Lower leg skin (tissue), 4 donors: ENCODE measurements at regions of chr6 and their contacts with region 1.

Region 1: GRCh38 chr6:2911171-2911570 is 8.1 kb upstream of the SERPINB9 start:
- DNase-seq: no peak
- H3K4me3 ChIP-seq: no peak overlapping the region
- CTCF ChIP-seq: no peak
- POLR2A ChIP-seq: no peak

Region 2: DNA sequence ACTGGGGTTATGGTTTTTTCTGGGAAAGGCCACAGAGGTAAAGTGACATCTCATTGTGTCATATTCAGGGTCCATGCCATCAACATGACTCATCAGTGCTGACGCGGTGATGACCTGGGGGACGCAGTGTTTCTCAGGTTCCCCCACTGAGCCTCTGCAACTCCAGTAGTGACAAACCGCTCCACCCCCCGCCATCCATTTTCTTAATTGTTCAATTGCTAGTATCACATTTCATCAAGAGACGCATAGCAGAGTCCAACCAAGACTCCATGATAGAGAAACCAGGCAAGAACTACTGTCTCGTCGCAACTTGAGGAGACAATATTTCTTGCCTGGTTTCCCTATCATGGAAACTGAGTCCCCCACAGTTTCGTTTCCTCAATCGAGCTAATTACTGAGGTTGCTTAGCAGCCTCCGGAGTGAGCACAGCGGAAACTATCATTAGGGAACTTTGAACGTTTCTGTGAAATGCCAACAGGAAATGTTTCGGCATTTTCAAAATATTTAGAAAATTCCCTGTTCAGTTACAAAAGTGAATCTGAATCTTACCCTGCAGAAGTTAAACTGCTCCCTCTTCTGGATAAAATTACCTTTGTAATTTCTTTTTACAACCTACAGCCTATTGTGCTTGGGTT is 57.3 kb before region 1 on chr6:
- intact Hi-C with region 1: loop called (anchors 10 kb)
- DNase-seq: no peak
- H3K4me3 ChIP-seq: no peak overlapping the region
- CTCF ChIP-seq: no peak
- POLR2A ChIP-seq: no peak

Region 3: DNA sequence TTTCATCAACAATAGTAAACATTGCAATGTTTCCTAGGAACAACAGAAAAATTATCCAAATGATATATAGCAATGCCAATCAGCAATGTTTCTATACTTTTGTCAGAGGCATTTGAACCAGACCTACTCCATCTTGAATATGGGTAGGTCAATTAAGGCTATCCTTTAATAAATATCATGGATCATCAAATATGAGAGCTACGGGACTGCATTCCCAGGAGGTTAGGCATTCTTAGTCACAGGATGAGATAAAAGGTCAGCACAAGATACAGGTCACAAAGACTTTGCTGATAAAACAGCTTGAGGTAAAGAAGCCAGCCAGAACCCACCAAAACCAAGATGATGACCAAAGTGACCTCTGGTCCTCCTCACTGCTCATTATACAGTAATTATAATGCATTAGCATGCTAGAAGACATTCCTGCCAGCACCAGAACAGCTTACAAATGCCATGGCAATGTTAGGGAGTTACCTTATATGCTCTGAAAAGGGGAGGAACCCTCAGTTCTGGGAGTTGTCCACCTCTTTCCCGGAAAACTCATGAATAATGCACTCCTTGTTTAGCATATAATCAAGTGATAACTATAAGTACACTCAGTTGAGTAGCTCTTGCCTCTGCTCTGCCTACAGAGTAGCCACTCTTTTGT is 68.8 kb after region 1 on chr6:
- intact Hi-C with region 1: no loop called
- DNase-seq: no peak
- H3K4me3 ChIP-seq: no peak overlapping the region
- CTCF ChIP-seq: no peak
- POLR2A ChIP-seq: no peak